ENCODE measurements at regions of chr22 and their contacts with region 1.

Region 1: GRCh38 chr22:37599153-37599552 is 9.5 kb upstream of the GGA1 start:
- DNase-seq: no peak
- H3K4me3 ChIP-seq: no peak overlapping the region
- H3K27ac ChIP-seq: no peak overlapping the region
- H3K4me1 ChIP-seq: no peaks in the 10 kb centered on the region
- H3K27me3 ChIP-seq: no peaks in the 10 kb centered on the region
- CTCF ChIP-seq: no peak

Region 2: GRCh38 chr22:37316875-37317371 is 282.2 kb before region 1 on chr22:
- intact Hi-C with region 1: loop called (anchors 10 kb)
- DNase-seq: peak in 1 of 2 donors; percentile 76
- H3K4me3 ChIP-seq: no peak overlapping the region
- H3K27ac ChIP-seq: no peak overlapping the region
- H3K4me1 ChIP-seq: no peaks in the 10 kb centered on the region
- H3K27me3 ChIP-seq: no peaks in the 10 kb centered on the region
- CTCF ChIP-seq: peak; percentile 46 to 80 (median 69)

Region 3: GRCh38 chr22:37561212-37562048 is 37.7 kb before region 1 on chr22:
- intact Hi-C with region 1: no loop called
- DNase-seq: peak; percentile 79 to 97
- H3K4me3 ChIP-seq: peak overlapping the region; percentile 84 to 95
- H3K27ac ChIP-seq: peak overlapping the region; percentile 98 to 99
- H3K4me1 ChIP-seq: peaks cover 39 to 52% of the 10 kb centered on the region in 2 donors
- H3K27me3 ChIP-seq: no peaks in the 10 kb centered on the region
- CTCF ChIP-seq: peak; percentile 81 to 91 (median 84)

Measured in ascending aorta (tissue), 2 donors.